HepG2 (cell line): ENCODE measurements at regions of chr5 and their contacts with region 1.

Region 1: GRCh38 chr5:81506900-81507588 is 113.1 kb upstream of the ACOT12 start:
- DNase-seq: peak; percentile 45
- ATAC-seq: peak; percentile 96
- H3K4me3 ChIP-seq: no peak overlapping the region
- H3K27ac ChIP-seq: no peak overlapping the region
- H3K4me1 ChIP-seq: no peaks in the 10 kb centered on the region
- H3K27me3 ChIP-seq: no peaks in the 10 kb centered on the region
- CTCF ChIP-seq: peak; percentile 69
- EP300 ChIP-seq: no peak
- POLR2A ChIP-seq: no peak
- RAD21 ChIP-seq: peak; percentile 48; the same call in 1 of the 2 replicates

Region 2: DNA sequence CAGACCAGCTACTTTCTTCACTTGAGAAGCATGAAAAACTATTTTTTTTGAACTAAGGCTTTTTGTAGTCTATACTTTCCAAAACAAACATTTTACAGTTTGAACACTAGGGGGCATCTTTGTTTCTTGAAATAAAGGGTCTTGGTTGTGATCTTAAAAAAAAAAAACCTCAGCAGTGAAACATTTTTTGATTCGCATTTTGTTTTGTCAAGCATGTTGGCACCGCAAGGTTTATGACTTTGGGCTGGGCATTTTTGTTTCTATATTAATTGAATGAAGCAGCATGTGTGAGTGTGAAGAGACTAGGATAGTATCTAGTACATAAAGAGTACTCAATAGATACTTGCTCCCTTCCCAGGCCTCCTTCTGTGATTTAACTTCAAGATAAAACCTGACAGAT is 81.5 kb before region 1 on chr5:
- CTCF ChIA-PET with region 1: no interaction called
- POLR2A ChIA-PET with region 1: no interaction called
- in situ Hi-C with region 1: no loop called
- intact Hi-C with region 1: loop called (anchors 10 kb)
- DNase-seq: peak; percentile 32
- ATAC-seq: peak; percentile 53; the same call in 2 of the 3 replicates
- H3K4me3 ChIP-seq: no peak overlapping the region
- H3K27ac ChIP-seq: no peak overlapping the region
- H3K4me1 ChIP-seq: peaks cover 13% of the 10 kb centered on the region; the same call in 1 of the 2 replicates
- H3K27me3 ChIP-seq: no peaks in the 10 kb centered on the region
- CTCF ChIP-seq: peak; percentile 44
- EP300 ChIP-seq: no peak
- POLR2A ChIP-seq: no peak
- RAD21 ChIP-seq: 0 out of 2 replicates have a peak, but pooled peaks have one; percentile 26

Region 3: DNA sequence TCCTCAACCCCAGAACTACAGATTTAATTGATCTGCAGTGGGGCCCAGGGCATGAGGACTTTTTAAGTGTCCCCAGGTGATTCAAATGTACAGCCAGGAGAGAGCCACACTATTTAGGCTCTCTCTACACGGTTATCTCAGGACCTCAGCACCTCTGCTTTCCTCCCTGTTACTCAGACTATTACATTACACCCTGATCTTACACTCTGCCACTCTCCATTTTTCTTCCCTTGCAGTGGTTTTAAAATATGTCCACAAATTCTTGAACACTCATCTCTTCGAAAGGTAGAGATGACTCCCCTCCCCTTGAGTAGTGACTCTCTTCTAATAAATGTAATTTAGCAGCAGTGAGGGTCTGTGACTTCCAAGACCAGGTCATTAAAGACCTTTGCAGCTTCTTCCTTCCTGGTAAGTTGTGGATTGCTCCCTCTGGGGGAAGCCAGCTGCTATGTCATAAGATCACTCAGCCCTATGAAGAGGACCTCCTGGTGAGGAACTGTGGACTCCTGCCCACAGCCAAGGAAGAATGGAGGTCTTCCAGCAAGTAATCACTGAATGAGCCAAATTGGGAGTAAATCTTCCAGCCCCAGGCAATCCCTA is 331.4 kb after region 1 on chr5:
- CTCF ChIA-PET with region 1: no interaction called
- POLR2A ChIA-PET with region 1: no interaction called
- in situ Hi-C with region 1: loop called (anchors 25 kb)
- intact Hi-C with region 1: loop called (anchors 2 kb)
- DNase-seq: no peak
- ATAC-seq: peak; percentile 81
- H3K4me3 ChIP-seq: no peak overlapping the region
- H3K27ac ChIP-seq: no peak overlapping the region
- H3K4me1 ChIP-seq: no peaks in the 10 kb centered on the region
- H3K27me3 ChIP-seq: no peaks in the 10 kb centered on the region
- CTCF ChIP-seq: peak; percentile 32; the same call in 1 of the 2 replicates
- EP300 ChIP-seq: no peak
- POLR2A ChIP-seq: no peak
- RAD21 ChIP-seq: no peak

Region 4: DNA sequence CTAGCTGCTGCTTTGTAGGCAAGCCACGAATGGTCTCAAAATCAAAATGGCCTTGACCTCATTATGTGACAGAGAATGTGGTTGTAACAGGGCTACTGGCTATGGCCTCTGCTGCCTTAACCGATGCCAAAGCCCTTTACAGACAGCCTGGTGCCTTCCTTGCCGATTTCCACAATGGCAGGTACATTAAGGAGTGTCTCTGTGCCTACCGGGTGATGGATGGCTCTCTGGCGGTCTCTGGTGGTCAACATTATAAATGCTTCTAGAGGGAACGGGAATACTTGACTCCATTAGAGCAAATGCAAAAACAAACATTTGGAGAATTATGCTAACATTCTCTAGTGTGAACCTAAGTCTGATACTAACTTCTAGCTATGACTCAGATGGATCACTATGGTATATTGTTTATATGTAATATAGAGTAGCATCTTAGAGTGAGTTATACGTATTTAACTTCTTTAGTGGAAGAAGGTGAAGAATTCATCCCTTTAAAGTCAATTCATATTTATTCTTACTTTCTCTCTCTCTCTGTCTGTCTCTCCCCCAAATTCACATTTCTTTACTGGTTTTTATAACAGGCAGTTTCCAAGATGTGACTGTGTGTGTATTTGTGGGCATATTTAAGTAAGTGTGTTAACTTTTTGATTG is 718.6 kb after region 1 on chr5:
- CTCF ChIA-PET with region 1: interaction called, 7 read pairs
- POLR2A ChIA-PET with region 1: no interaction called
- in situ Hi-C with region 1: no loop called
- intact Hi-C with region 1: loop called (anchors 1 kb)
- DNase-seq: peak; percentile 55
- ATAC-seq: peak; percentile 96
- H3K4me3 ChIP-seq: no peak overlapping the region
- H3K27ac ChIP-seq: no peak overlapping the region
- H3K4me1 ChIP-seq: no peaks in the 10 kb centered on the region
- H3K27me3 ChIP-seq: no peaks in the 10 kb centered on the region
- CTCF ChIP-seq: peak; percentile 86
- EP300 ChIP-seq: no peak
- POLR2A ChIP-seq: no peak
- RAD21 ChIP-seq: peak; percentile 71